ENCODE measurements at regions of chr2 and their contacts with region 1.

Region 1: GRCh38 chr2:226699321-226699720 is 100.3 kb downstream of the IRS1 start:
- DNase-seq: peak; percentile 90
- H3K4me3 ChIP-seq: no peak overlapping the region
- H3K27ac ChIP-seq: peak overlapping the region in 3 of 4 donors; percentile 25 to 64 (median 49)
- H3K4me1 ChIP-seq: peaks cover 0 to 37% (median 11%) of the 10 kb centered on the region in 4 donors
- H3K27me3 ChIP-seq: no peaks in the 10 kb centered on the region
- CTCF ChIP-seq: no peak
- EP300 ChIP-seq: peak in 2 of 4 donors; percentile 21 to 52
- POLR2A ChIP-seq: no peak

Region 2: DNA sequence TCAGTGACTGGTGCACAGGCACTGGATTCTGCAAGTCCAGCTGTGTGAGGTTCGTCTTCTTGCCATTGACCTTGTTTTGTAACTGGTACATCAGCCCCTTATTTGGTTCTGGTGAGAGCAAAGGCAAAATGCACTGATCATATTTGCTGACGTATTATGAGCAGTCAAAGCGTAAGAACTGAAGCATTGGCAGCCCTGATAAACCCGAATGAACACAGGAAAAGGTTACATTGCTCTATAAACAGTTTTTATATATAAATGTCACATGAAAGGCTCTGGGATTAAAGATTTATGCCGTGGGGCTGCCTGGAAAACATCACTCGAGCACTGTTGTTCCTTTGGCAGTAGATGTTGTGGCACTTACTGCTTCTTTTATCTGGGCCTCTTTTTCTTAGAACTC is 67.7 kb before region 1 on chr2:
- intact Hi-C with region 1: loop called (anchors 5 kb)
- DNase-seq: peak; percentile 90
- H3K4me3 ChIP-seq: no peak overlapping the region
- H3K27ac ChIP-seq: peak overlapping the region; percentile 39 to 84 (median 82)
- H3K4me1 ChIP-seq: peaks cover 0 to 29% (median 22%) of the 10 kb centered on the region in 4 donors
- H3K27me3 ChIP-seq: no peaks in the 10 kb centered on the region
- CTCF ChIP-seq: no peak
- EP300 ChIP-seq: peak; percentile 98 to 100 (median 98)
- POLR2A ChIP-seq: no peak